Calu3 (cell line): ENCODE measurements at regions of chr4 and their contacts with region 1.

Region 1: GRCh38 chr4:128454281-128455075 is 166.9 kb upstream of the PGRMC2 start:
- DNase-seq: peak; percentile 68
- H3K4me3 Mint-ChIP-seq: no peak overlapping the region
- H3K27ac Mint-ChIP-seq: no peak overlapping the region
- H3K4me1 Mint-ChIP-seq: no peaks in the 10 kb centered on the region
- H3K27me3 Mint-ChIP-seq: no peaks in the 10 kb centered on the region
- CTCF ChIP-seq: peak; percentile 62

Region 2: DNA sequence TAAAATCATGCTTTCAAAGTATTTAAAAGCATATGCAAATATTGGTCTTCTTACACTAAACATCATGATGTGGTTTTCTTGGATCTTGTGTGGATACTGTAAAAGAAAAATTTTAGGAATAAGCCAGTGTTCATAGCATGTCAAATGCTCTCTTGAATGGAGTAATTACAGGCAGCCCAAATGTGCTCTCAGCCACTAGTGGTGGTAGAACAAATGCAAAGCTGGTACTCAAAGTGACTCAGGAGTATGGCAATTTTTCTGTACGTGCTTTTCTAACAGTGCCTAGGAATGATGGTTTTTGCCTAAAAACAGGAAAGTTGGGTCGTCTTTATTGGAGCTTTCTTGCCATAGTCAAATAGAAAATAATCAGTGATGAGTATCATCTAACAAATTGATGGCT is 186.7 kb before region 1 on chr4:
- CTCF ChIA-PET with region 1: no interaction called
- intact Hi-C with region 1: no loop called
- DNase-seq: no peak
- H3K4me3 Mint-ChIP-seq: peak overlapping the region; percentile 57
- H3K27ac Mint-ChIP-seq: peak overlapping the region; percentile 53
- H3K4me1 Mint-ChIP-seq: peaks cover 20% of the 10 kb centered on the region
- H3K27me3 Mint-ChIP-seq: no peaks in the 10 kb centered on the region
- CTCF ChIP-seq: no peak

Region 3: DNA sequence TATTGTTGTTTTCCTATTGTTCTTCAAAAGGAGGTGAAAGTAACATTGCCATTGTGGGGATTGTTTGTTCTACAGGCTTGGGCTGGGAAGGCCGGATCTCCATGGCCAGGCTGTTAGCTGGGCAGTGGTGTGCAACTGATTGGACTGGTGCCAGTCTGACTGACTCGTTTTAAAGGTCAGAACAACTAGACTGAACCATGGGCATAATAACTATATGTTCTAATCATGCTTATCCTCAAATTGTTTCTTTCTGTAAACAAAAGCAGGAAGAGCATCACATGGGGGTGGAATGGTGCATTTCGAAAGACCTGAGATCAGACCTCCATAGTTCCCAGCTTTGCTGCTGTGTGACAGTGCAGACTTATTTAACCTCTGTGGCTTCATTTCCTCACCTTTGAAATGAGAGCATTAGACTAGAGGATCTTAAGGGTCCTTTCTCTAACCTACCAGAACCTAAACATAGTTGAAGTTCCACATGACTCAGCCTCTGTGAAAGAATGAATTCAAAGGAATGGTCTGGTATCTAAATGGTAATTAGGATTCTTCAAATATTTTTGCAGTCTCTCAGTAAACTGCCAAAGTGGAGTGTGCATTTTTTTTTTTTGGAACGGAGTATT is 100.2 kb before region 1 on chr4:
- CTCF ChIA-PET with region 1: no interaction called
- intact Hi-C with region 1: no loop called
- DNase-seq: peak; percentile 34
- H3K4me3 Mint-ChIP-seq: no peak overlapping the region
- H3K27ac Mint-ChIP-seq: peak overlapping the region; percentile 50
- H3K4me1 Mint-ChIP-seq: peaks cover 14% of the 10 kb centered on the region
- H3K27me3 Mint-ChIP-seq: no peaks in the 10 kb centered on the region
- CTCF ChIP-seq: no peak

Region 4: DNA sequence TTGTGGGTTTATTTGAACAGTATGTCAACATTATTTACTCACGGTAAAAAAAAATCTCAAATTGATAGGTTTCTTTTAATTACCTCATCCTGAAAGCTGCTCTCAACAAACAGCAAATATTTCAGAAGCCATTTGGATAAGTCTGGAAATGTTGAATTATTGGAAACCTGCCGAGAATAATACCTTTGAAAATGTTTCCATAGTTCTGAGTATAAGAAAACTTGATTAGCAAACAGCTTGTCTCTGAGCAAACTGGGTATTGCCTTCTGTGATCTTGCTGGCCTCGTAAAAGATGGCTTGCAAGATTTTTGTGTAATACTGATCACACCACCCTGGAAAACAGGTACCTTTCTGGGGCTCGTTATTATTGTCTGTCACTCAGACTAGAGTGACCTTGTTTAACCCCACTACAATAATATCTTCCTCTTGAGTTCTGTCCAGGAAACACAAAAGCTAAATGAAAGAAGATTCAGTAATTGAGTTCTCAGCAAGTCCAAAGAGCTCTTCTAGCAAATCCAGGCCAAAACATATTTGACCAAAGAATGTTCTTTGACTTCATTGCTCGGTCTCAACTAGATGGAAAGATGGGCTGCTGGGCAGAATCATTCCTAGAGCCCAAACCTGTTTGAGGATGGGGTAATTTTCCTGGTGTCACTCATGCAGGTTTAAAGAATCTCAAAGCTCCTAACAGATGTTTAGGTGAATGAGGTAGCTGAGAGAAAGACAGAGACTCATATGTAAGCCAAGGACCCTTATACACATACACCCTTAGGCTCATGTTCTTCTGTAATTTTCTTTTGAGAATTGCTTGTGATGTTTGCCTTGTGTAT is 99.4 kb after region 1 on chr4:
- CTCF ChIA-PET with region 1: interaction called, 20 read pairs
- intact Hi-C with region 1: loop called (anchors 2 kb)
- DNase-seq: no peak
- H3K4me3 Mint-ChIP-seq: peak overlapping the region; percentile 67
- H3K27ac Mint-ChIP-seq: peak overlapping the region; percentile 52
- H3K4me1 Mint-ChIP-seq: peaks cover 25% of the 10 kb centered on the region
- H3K27me3 Mint-ChIP-seq: no peaks in the 10 kb centered on the region
- CTCF ChIP-seq: no peak